ENCODE measurements at regions of chr5 and their contacts with region 1.

Region 1: DNA sequence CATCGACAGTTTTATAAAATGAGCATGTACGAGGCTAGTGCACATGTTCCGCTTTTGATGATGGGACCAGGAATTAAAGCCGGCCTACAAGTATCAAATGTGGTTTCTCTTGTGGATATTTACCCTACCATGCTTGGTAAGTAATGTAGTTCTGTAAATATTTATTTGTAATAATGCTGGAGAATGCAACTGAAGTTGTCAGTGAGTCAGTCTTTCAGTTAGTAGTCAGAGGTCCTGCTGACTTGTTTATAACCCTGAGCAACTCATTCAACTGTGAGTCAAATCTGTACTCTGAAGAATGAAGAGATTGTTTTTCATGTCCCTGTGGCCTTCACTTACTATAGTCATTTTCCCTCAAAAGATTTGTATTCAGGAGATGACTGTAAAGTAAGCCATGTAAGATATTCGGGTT is 28.4 kb upstream of the GPR150 start:
- DNase-seq: no peak
- ATAC-seq: peak; percentile 95
- H3K4me3 Mint-ChIP-seq: no peak overlapping the region
- H3K27ac Mint-ChIP-seq: peak overlapping the region; percentile 62
- H3K4me1 Mint-ChIP-seq: peaks cover 30% of the 10 kb centered on the region
- H3K27me3 Mint-ChIP-seq: no peaks in the 10 kb centered on the region

Region 2: DNA sequence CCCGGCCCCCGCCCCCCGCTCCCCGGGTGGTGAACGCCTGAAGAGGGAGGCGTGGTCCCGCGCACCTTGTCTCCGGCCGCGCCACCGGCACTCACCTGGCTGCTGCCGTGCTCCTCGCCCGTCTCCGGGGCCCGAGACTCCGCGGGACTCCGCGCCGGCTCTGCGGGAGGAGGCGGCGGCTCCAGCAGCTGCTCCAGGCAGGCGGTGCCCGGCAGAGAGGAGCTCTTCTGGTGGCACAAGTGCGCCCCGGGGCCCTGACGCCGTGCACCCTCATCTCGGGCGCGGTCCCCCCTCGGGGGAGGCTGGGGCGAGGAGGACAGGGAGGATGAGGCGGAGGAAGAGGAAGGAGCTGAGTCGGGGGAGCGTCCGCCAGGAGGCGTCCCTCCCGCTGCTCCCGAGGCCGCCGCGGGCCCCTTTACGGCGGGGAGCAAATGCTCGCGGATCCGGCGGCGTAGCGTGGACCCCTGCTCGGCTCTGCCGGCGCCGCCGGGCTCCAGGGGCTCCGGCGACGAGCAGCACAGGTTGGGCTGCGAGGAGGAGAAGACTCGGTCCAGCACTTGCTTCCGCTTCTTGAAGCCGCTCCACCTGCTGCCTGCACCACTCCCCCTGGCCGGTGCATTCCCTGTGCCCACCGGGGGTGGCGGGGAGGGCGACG is 307.6 kb before region 1 on chr5:
- CTCF ChIA-PET with region 1: no interaction called
- POLR2A ChIA-PET with region 1: no interaction called
- intact Hi-C with region 1: loop called in 1 of 2 experiments (anchors 10 kb)
- DNase-seq: peak; percentile 50
- ATAC-seq: peak; percentile 61
- H3K4me3 Mint-ChIP-seq: peak overlapping the region; percentile 26
- H3K27ac Mint-ChIP-seq: no peak overlapping the region
- H3K4me1 Mint-ChIP-seq: peaks cover 10% of the 10 kb centered on the region
- H3K27me3 Mint-ChIP-seq: peaks cover 52% of the 10 kb centered on the region

Region 3: DNA sequence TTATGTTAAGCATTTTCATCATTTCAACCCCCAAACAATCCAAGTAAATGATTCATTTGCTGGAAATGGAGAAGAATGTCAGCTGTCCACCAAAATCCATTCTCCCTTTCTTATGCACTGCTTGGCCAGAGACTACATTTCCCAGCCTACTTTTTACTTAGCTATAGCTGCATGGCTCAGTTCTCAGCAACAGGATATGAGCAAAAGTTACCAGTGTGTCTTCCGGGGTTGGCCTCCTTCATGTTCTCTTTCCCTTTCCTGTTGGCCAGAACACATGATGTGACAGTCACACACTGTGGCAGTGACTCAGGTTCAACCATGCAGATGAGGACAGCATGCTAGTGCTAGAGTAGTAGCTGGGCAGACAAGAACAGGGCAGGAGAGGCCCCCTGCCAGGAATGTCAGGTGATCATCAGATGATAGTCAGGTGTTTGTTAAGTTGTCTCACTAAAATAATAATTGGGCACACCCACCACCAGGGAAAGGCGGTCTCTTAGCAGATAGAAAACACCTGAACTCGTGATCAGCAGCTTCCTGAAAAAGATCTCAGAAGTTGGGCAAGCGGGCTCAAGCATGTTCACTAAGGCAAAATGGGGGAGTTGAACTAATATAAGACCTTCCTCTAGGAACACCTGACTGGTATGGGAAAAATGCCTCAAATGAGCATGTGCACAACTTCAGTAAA is 40.6 kb after region 1 on chr5:
- CTCF ChIA-PET with region 1: no interaction called
- POLR2A ChIA-PET with region 1: no interaction called
- intact Hi-C with region 1: loop called in 1 of 2 experiments (anchors 1 kb)
- DNase-seq: peak; percentile 85
- ATAC-seq: peak; percentile 99
- H3K4me3 Mint-ChIP-seq: peak overlapping the region; percentile 22
- H3K27ac Mint-ChIP-seq: peak overlapping the region; percentile 94
- H3K4me1 Mint-ChIP-seq: peaks cover 22% of the 10 kb centered on the region
- H3K27me3 Mint-ChIP-seq: peaks cover 1% of the 10 kb centered on the region

Region 4: GRCh38 chr5:96026406-96027041 is 435.0 kb after region 1 on chr5:
- CTCF ChIA-PET with region 1: no interaction called
- POLR2A ChIA-PET with region 1: no interaction called
- intact Hi-C with region 1: no loop called
- DNase-seq: no peak
- ATAC-seq: no peak
- H3K4me3 Mint-ChIP-seq: no peak overlapping the region
- H3K27ac Mint-ChIP-seq: no peak overlapping the region
- H3K4me1 Mint-ChIP-seq: no peaks in the 10 kb centered on the region
- H3K27me3 Mint-ChIP-seq: peaks cover 5% of the 10 kb centered on the region

Region 5: GRCh38 chr5:96067894-96068614 is 476.6 kb after region 1 on chr5:
- CTCF ChIA-PET with region 1: no interaction called
- POLR2A ChIA-PET with region 1: no interaction called
- intact Hi-C with region 1: no loop called
- DNase-seq: peak; percentile 36
- ATAC-seq: peak; percentile 62
- H3K4me3 Mint-ChIP-seq: no peak overlapping the region
- H3K27ac Mint-ChIP-seq: peak overlapping the region; percentile 87
- H3K4me1 Mint-ChIP-seq: peaks cover 52% of the 10 kb centered on the region
- H3K27me3 Mint-ChIP-seq: no peaks in the 10 kb centered on the region

Measured in activated CD4-positive, alpha-beta T cell treated with anti-CD3 and anti-CD28 coated beads for 36 hours (primary cell).